ENCODE measurements at regions of chr9 and their contacts with region 1.

Region 1: DNA sequence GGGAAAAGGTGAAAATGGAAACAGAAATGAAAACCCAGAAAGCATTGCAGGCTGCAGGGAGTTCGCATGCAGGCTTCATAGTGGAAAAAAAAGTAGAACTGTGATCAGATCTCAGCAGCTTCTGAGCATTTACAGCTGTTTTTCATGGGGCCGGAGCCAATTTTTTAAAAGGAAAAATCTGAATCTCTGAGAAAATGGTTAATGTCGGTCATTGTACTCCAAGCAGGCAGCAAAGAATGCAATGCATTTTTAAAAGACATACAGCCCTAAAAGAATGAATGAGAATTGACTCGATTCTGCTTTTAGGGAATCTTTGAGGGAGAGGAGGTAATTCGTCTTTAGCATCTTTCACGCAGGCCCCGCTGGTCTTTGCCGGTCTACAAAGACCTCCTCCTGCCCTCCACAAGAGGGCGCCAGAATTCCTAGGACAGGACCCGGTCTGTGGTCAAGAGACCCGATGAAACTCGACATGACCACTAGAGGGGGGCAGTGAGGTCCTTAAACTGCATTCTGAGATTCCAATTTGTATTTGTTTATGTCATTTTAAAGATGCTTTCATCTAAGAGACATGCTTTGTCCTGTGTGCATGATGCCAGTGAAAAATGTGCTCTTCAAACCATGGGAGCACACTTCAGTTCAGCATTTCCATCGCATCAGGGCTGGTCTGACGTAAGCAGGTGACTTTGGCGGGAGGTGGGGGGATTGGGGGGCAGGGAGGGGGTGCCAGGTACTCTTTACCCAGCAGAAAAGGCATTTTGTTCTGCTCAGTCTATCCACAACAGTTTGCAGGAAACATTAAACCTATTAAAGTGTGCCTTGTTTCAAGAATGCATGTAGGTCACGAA is 43.7 kb upstream of the TMEM252 start:
- DNase-seq: peak; percentile 79
- ATAC-seq: peak; percentile 99
- H3K4me3 ChIP-seq: no peak overlapping the region
- H3K27ac ChIP-seq: no peak overlapping the region
- H3K4me1 ChIP-seq: no peaks in the 10 kb centered on the region
- H3K27me3 ChIP-seq: no peaks in the 10 kb centered on the region; a peak in 1 of 5 replicates
- CTCF ChIP-seq: peak; percentile 98
- EP300 ChIP-seq: no peak
- POLR2A ChIP-seq: no peak
- RAD21 ChIP-seq: peak; percentile 94

Region 2: GRCh38 chr9:68678430-68678829 is 94.0 kb after region 1 on chr9:
- CTCF ChIA-PET with region 1: interaction called, 9 read pairs
- POLR2A ChIA-PET with region 1: no interaction called
- in situ Hi-C with region 1: no loop called
- intact Hi-C with region 1: loop called (anchors 2 kb)
- DNase-seq: peak; percentile 46
- ATAC-seq: peak; percentile 99
- H3K4me3 ChIP-seq: peak overlapping the region; percentile 27 to 39 (median 34); a peak in 4 of 6 replicates
- H3K27ac ChIP-seq: no peak overlapping the region
- H3K4me1 ChIP-seq: peaks cover 14% of the 10 kb centered on the region
- H3K27me3 ChIP-seq: peaks cover 0 to 23% of the 10 kb centered on the region in 2 experiments; a peak in 3 of 5 replicates
- CTCF ChIP-seq: peak; percentile 68
- EP300 ChIP-seq: no peak
- POLR2A ChIP-seq: no peak
- RAD21 ChIP-seq: no peak

Region 3: DNA sequence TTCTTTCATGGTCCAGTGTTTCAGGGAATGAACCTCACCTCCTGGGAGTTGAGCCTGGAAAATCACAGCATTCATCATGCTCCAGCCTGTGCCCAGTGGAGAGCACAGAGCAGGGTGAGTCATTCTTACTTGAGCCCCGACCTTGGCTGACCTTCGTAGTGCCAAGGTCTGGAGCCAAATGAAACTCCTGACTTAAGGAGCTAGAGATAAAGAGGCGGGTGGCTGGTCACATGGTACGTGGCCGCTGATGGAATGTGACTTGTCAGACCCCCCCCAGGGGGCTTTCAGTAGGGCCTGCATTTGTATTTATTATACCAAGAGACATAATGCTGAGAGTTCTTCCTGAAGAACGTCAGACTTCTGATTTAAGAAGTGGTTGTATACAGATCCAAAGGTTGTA is 105.7 kb after region 1 on chr9:
- CTCF ChIA-PET with region 1: interaction called, 8 read pairs
- POLR2A ChIA-PET with region 1: no interaction called
- in situ Hi-C with region 1: loop called (anchors 5 kb)
- intact Hi-C with region 1: no loop called
- DNase-seq: no peak
- ATAC-seq: 0 out of 3 replicates have a peak, but pooled peaks have one; percentile 32
- H3K4me3 ChIP-seq: no peak overlapping the region
- H3K27ac ChIP-seq: no peak overlapping the region
- H3K4me1 ChIP-seq: peaks cover 21% of the 10 kb centered on the region
- H3K27me3 ChIP-seq: peaks cover 0 to 11% of the 10 kb centered on the region in 2 experiments; a peak in 2 of 5 replicates
- CTCF ChIP-seq: no peak
- EP300 ChIP-seq: no peak; a peak in 1 of 4 replicates
- POLR2A ChIP-seq: no peak
- RAD21 ChIP-seq: no peak

Region 4: DNA sequence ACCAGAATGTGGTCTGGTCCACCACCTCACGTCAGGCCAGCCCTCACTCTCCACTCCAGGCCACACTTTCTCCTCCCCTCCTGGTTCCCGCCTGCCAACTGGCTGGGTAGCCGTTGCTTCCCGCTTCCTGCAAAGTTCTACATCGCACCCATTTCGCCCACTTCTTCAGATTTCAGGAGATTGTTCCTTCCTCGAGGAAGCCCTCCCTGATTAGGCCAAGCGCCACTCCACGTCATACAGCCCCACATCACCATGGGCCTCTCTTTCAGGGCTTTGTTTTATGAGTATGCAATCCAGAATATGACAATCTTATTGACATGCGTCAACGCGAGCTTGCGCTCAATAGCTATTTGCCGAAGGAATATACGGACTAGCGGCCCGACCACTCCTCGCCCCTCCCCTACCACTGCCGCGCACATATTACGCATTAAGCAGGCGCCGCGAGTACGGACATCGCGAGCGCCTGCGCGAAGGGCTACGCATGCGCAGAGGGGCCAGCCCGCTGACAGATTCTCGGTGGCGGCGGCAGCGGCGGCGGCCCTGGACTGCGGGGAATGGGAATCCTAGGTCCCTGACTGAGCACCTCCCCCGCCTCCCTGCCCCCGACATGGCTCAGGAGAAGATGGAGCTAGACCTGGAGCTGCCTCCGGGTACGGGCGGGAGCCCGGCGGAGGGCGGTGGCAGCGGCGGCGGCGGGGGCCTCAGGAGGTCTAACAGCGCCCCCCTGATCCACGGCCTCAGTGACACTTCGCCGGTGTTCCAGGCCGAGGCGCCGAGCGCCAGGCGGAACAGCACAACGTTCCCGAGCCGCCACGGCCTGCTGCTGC is 195.4 kb after region 1 on chr9:
- CTCF ChIA-PET with region 1: interaction called, 6 read pairs
- POLR2A ChIA-PET with region 1: no interaction called
- in situ Hi-C with region 1: no loop called
- intact Hi-C with region 1: loop called (anchors 1 kb)
- DNase-seq: peak; percentile 89
- ATAC-seq: peak; percentile 93
- H3K4me3 ChIP-seq: peak overlapping the region; percentile 75 to 95 (median 78)
- H3K27ac ChIP-seq: peak overlapping the region; percentile 95
- H3K4me1 ChIP-seq: peaks cover 53% of the 10 kb centered on the region
- H3K27me3 ChIP-seq: no peaks in the 10 kb centered on the region; a peak in 1 of 5 replicates
- CTCF ChIP-seq: peak; percentile 92
- EP300 ChIP-seq: 0 out of 4 replicates have a peak, but pooled peaks of 1 of the 2 experiments have one; percentile 1
- POLR2A ChIP-seq: peak; percentile 80 to 82
- RAD21 ChIP-seq: peak; percentile 83

Region 5: DNA sequence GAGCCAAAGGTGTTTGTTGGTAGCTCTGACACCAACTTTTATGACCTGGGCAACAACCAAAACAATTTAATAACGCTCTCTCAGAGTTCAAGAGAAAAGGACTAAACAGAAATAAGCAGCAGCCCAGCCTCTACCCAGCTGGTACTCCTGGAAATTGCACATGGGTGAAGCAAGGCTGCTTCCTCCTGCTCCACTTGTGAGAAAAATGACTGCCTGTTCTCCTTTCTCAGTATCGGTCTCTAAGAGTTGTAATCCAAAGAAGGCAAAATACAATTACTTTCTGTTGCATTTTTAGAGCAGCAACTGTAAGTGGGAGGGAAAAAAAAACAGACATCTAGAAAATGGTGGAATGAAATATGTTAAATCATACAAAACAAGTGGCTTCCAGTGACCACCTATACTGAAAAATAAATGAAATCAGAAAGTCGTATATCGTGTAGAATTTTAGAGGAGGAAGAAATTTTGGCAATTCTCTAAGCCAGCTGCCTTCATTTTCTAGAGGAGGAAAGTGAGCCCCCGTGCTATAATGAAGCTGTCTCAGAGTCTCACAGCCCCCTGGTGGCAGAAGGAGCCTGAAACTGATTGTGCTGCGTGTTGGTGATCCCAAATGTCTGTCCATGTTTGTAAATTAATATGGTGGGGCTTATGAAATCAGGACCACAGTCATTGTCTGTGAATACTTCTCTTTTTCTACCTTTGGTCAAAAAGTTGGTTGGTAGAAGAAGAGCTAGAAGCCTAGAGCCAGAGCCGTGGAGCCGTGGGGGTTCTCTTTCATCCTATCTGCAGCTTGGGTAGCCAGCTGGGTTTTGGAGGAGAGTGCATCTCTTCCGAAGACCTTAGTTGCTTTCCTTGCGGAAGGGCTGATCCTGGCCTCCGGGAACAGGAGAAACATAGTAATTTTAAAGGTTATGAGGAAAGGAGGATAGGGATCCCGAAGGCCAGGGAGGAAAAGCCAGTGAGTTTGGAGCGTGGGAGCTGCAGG is 260.5 kb after region 1 on chr9:
- CTCF ChIA-PET with region 1: interaction called, 29 read pairs
- POLR2A ChIA-PET with region 1: no interaction called
- in situ Hi-C with region 1: no loop called
- intact Hi-C with region 1: loop called (anchors 1 kb)
- DNase-seq: peak; percentile 25
- ATAC-seq: peak; percentile 78
- H3K4me3 ChIP-seq: no peak overlapping the region
- H3K27ac ChIP-seq: no peak overlapping the region
- H3K4me1 ChIP-seq: no peaks in the 10 kb centered on the region
- H3K27me3 ChIP-seq: no peaks in the 10 kb centered on the region
- CTCF ChIP-seq: peak; percentile 55
- EP300 ChIP-seq: no peak
- POLR2A ChIP-seq: no peak
- RAD21 ChIP-seq: no peak

Region 6: GRCh38 chr9:68999393-69000105 is 415.1 kb after region 1 on chr9:
- CTCF ChIA-PET with region 1: interaction called, 45 read pairs
- POLR2A ChIA-PET with region 1: no interaction called
- in situ Hi-C with region 1: loop called (anchors 5 kb)
- intact Hi-C with region 1: loop called (anchors 1 kb)
- DNase-seq: peak; percentile 75
- ATAC-seq: peak; percentile 98
- H3K4me3 ChIP-seq: no peak overlapping the region
- H3K27ac ChIP-seq: no peak overlapping the region
- H3K4me1 ChIP-seq: peaks cover 7% of the 10 kb centered on the region; the same call in 1 of the 2 replicates
- H3K27me3 ChIP-seq: no peaks in the 10 kb centered on the region
- CTCF ChIP-seq: peak; percentile 92
- EP300 ChIP-seq: no peak
- POLR2A ChIP-seq: no peak
- RAD21 ChIP-seq: peak; percentile 83

Region 7: GRCh38 chr9:69027355-69028096 is 443.1 kb after region 1 on chr9:
- CTCF ChIA-PET with region 1: interaction called, 48 read pairs
- POLR2A ChIA-PET with region 1: no interaction called
- in situ Hi-C with region 1: no loop called
- intact Hi-C with region 1: loop called (anchors 1 kb)
- DNase-seq: peak; percentile 54
- ATAC-seq: peak; percentile 87
- H3K4me3 ChIP-seq: no peak overlapping the region
- H3K27ac ChIP-seq: no peak overlapping the region
- H3K4me1 ChIP-seq: peaks cover 19% of the 10 kb centered on the region
- H3K27me3 ChIP-seq: no peaks in the 10 kb centered on the region
- CTCF ChIP-seq: peak; percentile 83
- EP300 ChIP-seq: no peak
- POLR2A ChIP-seq: no peak
- RAD21 ChIP-seq: peak; percentile 38; the same call in 1 of the 2 replicates

Region 8: DNA sequence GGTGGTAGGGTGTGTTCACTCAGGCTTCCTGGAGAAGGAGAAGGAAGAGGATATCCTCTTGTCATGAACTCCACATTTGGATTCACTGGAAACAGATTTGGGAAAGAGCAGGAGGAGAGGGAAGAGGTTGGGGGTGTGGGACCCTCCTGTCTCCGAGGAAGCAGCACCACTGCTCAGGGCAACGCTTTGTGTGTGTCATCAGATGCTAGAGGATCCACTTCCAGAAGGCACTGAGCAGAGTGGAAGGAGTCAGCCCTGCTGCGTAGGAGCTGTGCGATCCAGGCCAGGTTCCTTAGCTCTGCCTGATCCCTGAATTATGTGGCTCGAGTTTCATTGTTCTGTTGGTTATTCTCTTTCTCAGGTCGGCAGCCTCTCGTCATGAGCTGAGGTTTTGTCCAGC is 552.4 kb after region 1 on chr9:
- CTCF ChIA-PET with region 1: no interaction called
- POLR2A ChIA-PET with region 1: no interaction called
- in situ Hi-C with region 1: no loop called
- intact Hi-C with region 1: no loop called
- DNase-seq: no peak
- ATAC-seq: no peak
- H3K4me3 ChIP-seq: no peak overlapping the region
- H3K27ac ChIP-seq: no peak overlapping the region
- H3K4me1 ChIP-seq: peaks cover 46% of the 10 kb centered on the region
- H3K27me3 ChIP-seq: no peaks in the 10 kb centered on the region
- CTCF ChIP-seq: no peak
- EP300 ChIP-seq: no peak
- POLR2A ChIP-seq: no peak
- RAD21 ChIP-seq: no peak

Measured in HepG2 (cell line).